Activated CD8-positive, alpha-beta T cell treated with anti-CD3 and anti-CD28 coated beads, Interleukin-2, amount 10 ng/mL, durations not matched to agents 7 days and 5 days (primary cell): ENCODE measurements at regions of chr6 and their contacts with region 1.

Region 1: DNA sequence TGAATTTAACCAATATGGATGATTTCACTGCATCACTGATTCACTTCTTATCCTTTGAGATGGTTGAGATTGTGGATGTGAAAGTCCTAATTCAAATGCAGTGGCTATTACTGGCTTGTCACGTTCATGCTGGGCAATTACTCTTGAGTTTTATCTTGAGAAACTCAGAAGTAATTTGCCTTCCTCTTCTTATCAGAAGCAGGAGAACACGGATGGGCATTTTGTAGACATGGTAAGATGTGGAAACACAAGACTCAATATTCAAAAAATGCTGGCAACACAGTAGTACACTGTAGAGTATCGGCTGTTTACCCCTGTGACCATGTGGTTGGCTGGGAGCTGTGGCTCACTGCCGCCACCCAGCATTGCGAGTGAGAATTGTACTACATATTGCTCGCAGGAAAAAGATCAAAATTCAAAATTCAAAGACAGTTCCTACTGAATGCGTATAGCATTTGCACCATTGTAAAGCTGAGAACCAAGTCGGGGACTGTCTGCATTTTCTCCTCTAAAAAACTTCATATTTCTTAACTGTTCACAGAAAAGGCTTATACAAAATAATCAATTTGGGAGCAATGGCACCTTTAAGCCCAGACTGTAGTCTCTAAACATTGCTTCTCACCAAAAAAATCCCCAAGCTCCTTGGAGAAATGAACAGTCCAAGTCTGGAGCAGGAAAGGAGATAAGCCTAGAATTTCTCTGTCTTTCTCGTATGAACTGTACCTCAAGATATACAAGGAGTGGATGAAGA is 61.9 kb upstream of the ELOVL5 start:
- DNase-seq: peak; percentile 66
- ATAC-seq: peak; percentile 90
- H3K4me3 Mint-ChIP-seq: no peak overlapping the region
- H3K27ac Mint-ChIP-seq: no peak overlapping the region
- H3K4me1 Mint-ChIP-seq: no peaks in the 10 kb centered on the region
- H3K27me3 Mint-ChIP-seq: peaks cover 2% of the 10 kb centered on the region

Region 2: GRCh38 chr6:53171605-53172446 is 238.9 kb before region 1 on chr6:
- CTCF ChIA-PET with region 1: interaction called, 31 read pairs
- POLR2A ChIA-PET with region 1: no interaction called
- DNase-seq: peak; percentile 91
- ATAC-seq: peak; percentile 90
- H3K4me3 Mint-ChIP-seq: no peak overlapping the region
- H3K27ac Mint-ChIP-seq: no peak overlapping the region
- H3K4me1 Mint-ChIP-seq: no peaks in the 10 kb centered on the region
- H3K27me3 Mint-ChIP-seq: peaks cover 3% of the 10 kb centered on the region

Region 3: GRCh38 chr6:53348371-53349208 is 62.1 kb before region 1 on chr6 and contains the start of gene ELOVL5:
- CTCF ChIA-PET with region 1: interaction called, 14 read pairs
- POLR2A ChIA-PET with region 1: no interaction called
- DNase-seq: peak; percentile 98
- ATAC-seq: peak; percentile 80
- H3K4me3 Mint-ChIP-seq: peak within 1 kb of the TSS; percentile 96
- H3K27ac Mint-ChIP-seq: peak within 1 kb of the TSS; percentile 92
- H3K4me1 Mint-ChIP-seq: peaks cover 46% of the 10 kb centered on the region
- H3K27me3 Mint-ChIP-seq: peaks cover 21% of the 10 kb centered on the region
- total RNA-seq, gene ELOVL5: 116 TPM

Region 4: GRCh38 chr6:53398247-53399026 is 12.2 kb before region 1 on chr6:
- CTCF ChIA-PET with region 1: interaction called, 12 read pairs
- POLR2A ChIA-PET with region 1: no interaction called
- DNase-seq: no peak
- ATAC-seq: no peak
- H3K4me3 Mint-ChIP-seq: no peak overlapping the region
- H3K27ac Mint-ChIP-seq: no peak overlapping the region
- H3K4me1 Mint-ChIP-seq: no peaks in the 10 kb centered on the region
- H3K27me3 Mint-ChIP-seq: peaks cover 8% of the 10 kb centered on the region

Region 5: GRCh38 chr6:53426667-53427270 is 16.1 kb after region 1 on chr6:
- CTCF ChIA-PET with region 1: interaction called, 13 read pairs
- POLR2A ChIA-PET with region 1: no interaction called
- DNase-seq: no peak
- ATAC-seq: no peak
- H3K4me3 Mint-ChIP-seq: no peak overlapping the region
- H3K27ac Mint-ChIP-seq: no peak overlapping the region
- H3K4me1 Mint-ChIP-seq: peaks cover 10% of the 10 kb centered on the region
- H3K27me3 Mint-ChIP-seq: peaks cover 3% of the 10 kb centered on the region

Region 6: DNA sequence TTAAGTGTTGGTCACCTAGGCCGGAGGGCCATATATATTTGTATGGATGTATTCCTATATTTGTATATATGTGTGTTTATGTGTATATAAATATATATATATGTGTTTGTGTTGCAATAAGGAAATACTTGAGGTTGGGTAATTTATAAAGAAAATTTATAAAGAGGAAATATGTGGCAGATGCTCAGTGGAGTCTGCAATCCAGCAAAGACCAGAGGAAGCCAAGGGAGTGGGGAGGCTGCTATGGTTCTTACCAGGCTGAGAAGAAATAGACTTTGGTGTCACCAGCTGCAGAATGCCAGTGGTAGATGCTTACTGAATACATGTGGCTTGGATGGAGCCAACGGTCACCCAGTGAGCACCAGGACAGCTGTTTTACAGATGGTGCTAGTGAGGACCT is 35.5 kb after region 1 on chr6:
- CTCF ChIA-PET with region 1: no interaction called
- POLR2A ChIA-PET with region 1: no interaction called
- DNase-seq: no peak
- ATAC-seq: no peak
- H3K4me3 Mint-ChIP-seq: no peak overlapping the region
- H3K27ac Mint-ChIP-seq: no peak overlapping the region
- H3K4me1 Mint-ChIP-seq: no peaks in the 10 kb centered on the region
- H3K27me3 Mint-ChIP-seq: peaks cover 22% of the 10 kb centered on the region

Region 7: GRCh38 chr6:53484476-53485280 is 74.0 kb after region 1 on chr6:
- CTCF ChIA-PET with region 1: interaction called, 16 read pairs
- POLR2A ChIA-PET with region 1: no interaction called
- DNase-seq: peak; percentile 82
- ATAC-seq: peak; percentile 51
- H3K4me3 Mint-ChIP-seq: no peak overlapping the region
- H3K27ac Mint-ChIP-seq: no peak overlapping the region
- H3K4me1 Mint-ChIP-seq: peaks cover 17% of the 10 kb centered on the region
- H3K27me3 Mint-ChIP-seq: peaks cover 21% of the 10 kb centered on the region

Region 8: GRCh38 chr6:53496797-53497375 is 86.2 kb after region 1 on chr6:
- CTCF ChIA-PET with region 1: no interaction called
- POLR2A ChIA-PET with region 1: no interaction called
- DNase-seq: no peak
- ATAC-seq: no peak
- H3K4me3 Mint-ChIP-seq: no peak overlapping the region
- H3K27ac Mint-ChIP-seq: no peak overlapping the region
- H3K4me1 Mint-ChIP-seq: peaks cover 4% of the 10 kb centered on the region
- H3K27me3 Mint-ChIP-seq: peaks cover 4% of the 10 kb centered on the region